Upper lobe of right lung (tissue), 1 donor: ENCODE measurements at regions of chr12 and their contacts with region 1.

Region 1: DNA sequence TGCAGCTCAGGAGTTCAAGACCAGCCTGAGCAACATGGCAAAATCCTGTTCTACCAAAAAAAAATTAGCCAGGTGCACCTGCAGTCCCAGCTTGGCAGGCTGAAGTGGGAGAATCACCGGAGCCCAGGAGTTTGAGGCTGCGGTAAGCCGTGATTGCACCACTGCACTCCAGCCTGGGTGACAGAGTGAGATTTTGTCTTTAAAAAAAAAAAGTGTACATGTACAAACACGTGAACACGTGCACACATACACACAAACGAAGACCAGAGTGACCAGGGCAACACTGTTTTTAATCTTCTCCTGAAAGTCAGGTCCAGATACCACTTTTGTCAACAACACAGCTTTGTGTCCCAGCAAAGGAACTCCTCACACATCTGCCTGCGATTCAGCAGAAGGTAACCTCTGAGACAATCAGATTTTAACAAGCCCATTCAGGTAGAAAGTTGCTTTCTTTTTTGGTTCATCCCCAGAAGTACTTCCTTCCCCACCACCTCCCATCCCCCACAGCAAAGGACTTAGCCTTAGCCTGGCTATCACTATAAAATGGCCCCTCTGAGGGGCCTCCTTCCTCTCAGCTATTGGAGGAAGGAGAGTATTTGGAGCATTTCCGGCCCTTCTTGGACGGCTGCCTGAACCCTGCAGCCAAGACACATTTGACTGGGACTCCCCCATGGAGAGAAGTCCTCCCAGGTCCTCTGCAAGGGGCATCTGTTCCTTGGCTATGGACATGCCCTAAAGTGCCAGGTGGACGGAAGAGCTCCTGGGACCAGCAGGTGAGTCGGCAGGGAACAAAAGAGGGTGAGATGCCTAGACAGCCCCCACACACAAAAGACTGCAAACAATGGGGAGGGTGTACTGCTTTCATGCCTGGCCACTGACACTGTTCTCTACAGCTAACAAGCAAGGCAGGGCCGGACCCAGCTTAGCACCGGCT is 9.8 kb downstream of the CTDSP2 start:
- DNase-seq: peak; percentile 76
- ATAC-seq: peak; percentile 40
- H3K4me3 ChIP-seq: peak overlapping the region; percentile 31
- H3K27ac ChIP-seq: peak overlapping the region; percentile 68
- H3K4me1 ChIP-seq: peaks cover 100% of the 10 kb centered on the region
- H3K27me3 ChIP-seq: no peaks in the 10 kb centered on the region
- CTCF ChIP-seq: no peak

Region 2: DNA sequence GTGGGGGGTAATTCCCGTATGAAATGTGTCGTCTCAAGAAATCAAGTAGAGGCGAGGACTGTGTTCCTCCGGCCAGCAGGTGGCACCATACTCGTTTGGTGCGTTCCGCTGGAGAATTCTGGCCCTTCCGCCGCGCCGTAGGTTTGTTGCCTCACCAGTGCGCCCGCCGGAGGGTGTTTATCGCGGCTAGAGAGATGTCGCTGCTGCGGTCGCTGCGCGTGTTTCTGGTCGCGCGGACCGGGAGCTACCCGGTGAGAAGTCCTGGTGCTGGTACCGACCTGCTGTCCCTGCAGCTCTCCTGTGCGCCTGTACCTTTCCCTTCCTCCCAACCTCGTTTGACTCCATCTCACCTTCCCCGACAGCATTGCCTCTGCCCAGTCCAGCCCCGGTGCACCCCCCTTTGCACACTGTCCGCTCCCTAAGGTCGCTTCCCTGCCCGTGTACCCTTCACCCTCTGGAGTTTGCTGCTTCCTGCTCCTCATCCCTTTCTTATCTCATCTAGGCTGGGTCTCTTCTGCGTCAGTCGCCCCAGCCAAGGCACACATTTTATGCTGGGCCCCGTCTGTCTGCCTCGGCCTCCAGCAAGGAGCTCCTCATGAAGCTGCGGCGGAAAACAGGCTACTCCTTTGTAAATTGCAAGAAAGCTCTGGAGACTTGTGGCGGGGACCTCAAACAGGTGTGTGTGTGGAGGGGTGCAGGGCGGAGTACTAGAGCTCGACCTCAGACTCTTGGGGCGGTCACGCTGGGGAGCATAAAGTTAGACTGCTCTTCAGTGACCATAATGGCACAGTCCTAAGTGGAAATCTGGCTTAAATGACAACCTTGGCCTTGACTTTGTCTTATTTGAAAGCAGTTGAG is 53.9 kb before region 1 on chr12 and contains the start of gene TSFM:
- intact Hi-C with region 1: no loop called
- DNase-seq: peak; percentile 98
- ATAC-seq: peak; percentile 99
- H3K4me3 ChIP-seq: peak within 1 kb of the TSS; percentile 95
- H3K27ac ChIP-seq: peak within 1 kb of the TSS; percentile 74
- H3K4me1 ChIP-seq: peaks cover 18% of the 10 kb centered on the region
- H3K27me3 ChIP-seq: no peaks in the 10 kb centered on the region
- CTCF ChIP-seq: peak; percentile 92
- total RNA-seq, gene TSFM: 24.3 TPM

Region 3: GRCh38 chr12:57868851-57869268 is 32.2 kb after region 1 on chr12:
- intact Hi-C with region 1: no loop called
- DNase-seq: no peak
- ATAC-seq: no peak
- H3K4me3 ChIP-seq: no peak overlapping the region
- H3K27ac ChIP-seq: peak overlapping the region; percentile 51
- H3K4me1 ChIP-seq: peaks cover 12% of the 10 kb centered on the region
- H3K27me3 ChIP-seq: no peaks in the 10 kb centered on the region
- CTCF ChIP-seq: no peak

Region 4: GRCh38 chr12:57899010-57899662 is 62.4 kb after region 1 on chr12:
- intact Hi-C with region 1: loop called (anchors 5 kb)
- DNase-seq: peak; percentile 74
- ATAC-seq: peak; percentile 17
- H3K4me3 ChIP-seq: no peak overlapping the region
- H3K27ac ChIP-seq: peak overlapping the region; percentile 99
- H3K4me1 ChIP-seq: peaks cover 50% of the 10 kb centered on the region
- H3K27me3 ChIP-seq: no peaks in the 10 kb centered on the region
- CTCF ChIP-seq: no peak